ENCODE measurements at regions of chr4 and their contacts with region 1.

Region 1: GRCh38 chr4:113644398-113644797 is 117.1 kb downstream of the CAMK2D start:
- DNase-seq: no peak
- H3K4me3 ChIP-seq: no peak overlapping the region
- H3K27ac ChIP-seq: no peak overlapping the region
- H3K4me1 ChIP-seq: peaks cover 34% of the 10 kb centered on the region
- H3K27me3 ChIP-seq: no peaks in the 10 kb centered on the region; the same call in 1 of the 2 replicates
- CTCF ChIP-seq: no peak

Region 2: GRCh38 chr4:113711883-113712662 is 67.7 kb after region 1 on chr4:
- CTCF ChIA-PET with region 1: interaction called, 12 read pairs
- POLR2A ChIA-PET with region 1: no interaction called
- intact Hi-C with region 1: no loop called
- DNase-seq: no peak
- H3K4me3 ChIP-seq: no peak overlapping the region
- H3K27ac ChIP-seq: no peak overlapping the region
- H3K4me1 ChIP-seq: no peaks in the 10 kb centered on the region
- H3K27me3 ChIP-seq: no peaks in the 10 kb centered on the region
- CTCF ChIP-seq: no peak

Measured in PC-9 (cell line).